ENCODE measurements at regions of chr12 and their contacts with region 1.

Region 1: DNA sequence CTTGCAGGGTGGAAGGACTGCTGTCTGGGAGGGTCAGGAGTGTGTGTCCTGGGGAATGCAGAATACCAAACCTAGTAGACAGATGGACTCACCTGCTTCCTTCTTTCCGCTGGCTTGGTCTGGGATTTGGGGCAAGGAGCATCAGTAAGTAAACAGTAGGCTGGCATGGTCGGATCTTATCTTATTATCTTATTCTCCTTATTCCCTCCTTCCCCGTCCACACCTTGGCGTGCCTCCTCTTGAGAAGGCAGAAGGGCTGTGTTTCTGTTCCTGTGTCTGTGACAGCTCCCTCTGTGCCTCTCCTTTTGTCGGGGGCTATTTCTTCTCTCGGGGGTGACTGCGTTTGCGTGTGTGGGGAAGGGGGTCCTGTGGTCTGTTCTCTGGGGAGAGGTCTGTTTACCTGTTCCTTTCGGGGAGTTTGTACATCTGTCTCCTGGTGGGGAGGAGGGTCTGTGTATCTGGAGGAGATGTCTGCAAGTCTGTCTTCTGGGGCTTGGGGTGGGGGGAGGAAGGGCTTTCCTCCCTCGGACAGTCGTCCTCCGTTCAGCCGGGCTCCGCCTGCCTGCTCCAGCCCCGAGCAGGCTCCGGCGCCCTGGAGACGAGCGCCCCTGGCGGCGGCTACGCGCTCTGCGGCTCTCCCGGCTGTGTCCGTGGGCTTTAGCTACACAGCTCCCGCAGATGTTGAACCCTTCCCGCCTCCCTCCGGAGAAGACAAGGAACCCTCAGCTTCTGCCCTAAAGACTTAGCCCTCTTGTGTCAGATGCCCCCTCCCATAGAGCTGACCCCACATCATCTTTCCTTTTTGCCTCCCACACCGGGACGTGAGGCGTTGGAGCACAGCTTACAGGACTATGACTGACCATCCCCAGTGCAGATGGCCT is 4.3 kb downstream of the KRT86 start:
- DNase-seq: peak; percentile 76
- H3K4me3 Mint-ChIP-seq: no peak overlapping the region
- H3K27ac Mint-ChIP-seq: no peak overlapping the region
- H3K4me1 Mint-ChIP-seq: peaks cover 9% of the 10 kb centered on the region
- H3K27me3 Mint-ChIP-seq: peaks cover 56% of the 10 kb centered on the region

Region 2: GRCh38 chr12:52213512-52214420 is 65.0 kb before region 1 on chr12:
- CTCF ChIA-PET with region 1: interaction called, 13 read pairs
- POLR2A ChIA-PET with region 1: no interaction called
- DNase-seq: peak; percentile 71
- H3K4me3 Mint-ChIP-seq: no peak overlapping the region
- H3K27ac Mint-ChIP-seq: no peak overlapping the region
- H3K4me1 Mint-ChIP-seq: no peaks in the 10 kb centered on the region
- H3K27me3 Mint-ChIP-seq: peaks cover 15% of the 10 kb centered on the region

Region 3: DNA sequence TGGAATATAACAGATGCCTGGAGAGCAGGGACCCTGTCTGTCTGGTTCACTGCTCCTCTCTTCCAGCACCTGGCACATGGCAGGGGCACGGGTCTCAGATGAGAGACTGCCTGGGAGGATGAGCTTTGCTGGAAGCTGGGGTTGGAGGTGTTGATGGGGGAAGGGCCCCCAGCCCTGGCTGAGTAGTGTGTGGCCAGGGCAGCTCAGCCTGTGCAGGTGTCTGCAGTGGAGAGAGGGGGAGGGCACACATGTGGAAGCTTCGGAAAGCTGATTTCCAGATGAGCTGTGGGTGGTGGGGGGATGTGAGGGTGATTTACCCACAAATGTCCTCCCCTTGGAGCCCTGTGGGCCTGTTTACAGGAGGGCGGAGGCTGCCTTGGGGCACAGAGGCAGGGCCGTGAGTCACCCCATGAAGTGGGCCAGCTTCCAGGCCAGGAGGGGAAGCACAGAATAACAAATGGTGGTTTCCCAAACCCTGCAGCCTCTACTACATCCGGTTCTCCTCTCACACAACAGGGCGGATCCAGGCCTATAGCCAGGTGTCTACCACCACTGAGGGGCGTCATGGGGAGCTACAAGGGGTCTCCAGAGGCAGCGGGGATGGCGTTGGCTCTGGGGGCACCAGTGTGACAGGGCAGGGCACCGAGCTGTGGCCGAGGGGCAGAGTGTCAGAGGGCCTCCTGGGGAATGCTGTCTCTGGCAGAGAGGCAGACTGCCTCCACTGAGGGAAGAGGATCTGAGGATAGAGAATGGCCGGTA is 34.7 kb before region 1 on chr12:
- CTCF ChIA-PET with region 1: interaction called, 32 read pairs
- POLR2A ChIA-PET with region 1: no interaction called
- DNase-seq: peak; percentile 78
- H3K4me3 Mint-ChIP-seq: peak overlapping the region; percentile 66
- H3K27ac Mint-ChIP-seq: peak overlapping the region; percentile 89
- H3K4me1 Mint-ChIP-seq: peaks cover 56% of the 10 kb centered on the region
- H3K27me3 Mint-ChIP-seq: peaks cover 6% of the 10 kb centered on the region

Region 4: DNA sequence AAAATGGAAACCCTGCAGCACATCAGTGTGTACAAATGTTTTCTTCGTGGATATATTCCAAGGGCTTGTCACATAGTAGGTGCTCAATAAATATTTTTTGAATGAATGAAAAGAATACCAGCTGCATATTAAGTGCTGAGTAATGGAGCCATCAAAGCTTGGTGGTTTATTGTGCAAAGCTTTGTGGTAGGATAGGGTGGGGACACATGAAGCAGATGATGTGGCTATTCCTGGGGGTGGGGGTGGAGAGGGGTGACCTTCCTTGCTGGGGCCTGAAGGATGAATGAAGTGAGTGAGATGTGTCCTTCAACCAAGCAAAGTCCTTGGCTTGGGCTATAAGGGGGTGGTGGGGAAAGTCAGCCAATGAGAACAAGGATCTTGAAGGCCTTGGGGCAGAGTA is 16.9 kb after region 1 on chr12:
- CTCF ChIA-PET with region 1: interaction called, 31 read pairs
- POLR2A ChIA-PET with region 1: no interaction called
- DNase-seq: no peak
- H3K4me3 Mint-ChIP-seq: no peak overlapping the region
- H3K27ac Mint-ChIP-seq: no peak overlapping the region
- H3K4me1 Mint-ChIP-seq: peaks cover 7% of the 10 kb centered on the region
- H3K27me3 Mint-ChIP-seq: peaks cover 64% of the 10 kb centered on the region

Region 5: GRCh38 chr12:52327052-52327829 is 48.5 kb after region 1 on chr12:
- CTCF ChIA-PET with region 1: interaction called, 15 read pairs
- POLR2A ChIA-PET with region 1: no interaction called
- DNase-seq: peak; percentile 83
- H3K4me3 Mint-ChIP-seq: no peak overlapping the region
- H3K27ac Mint-ChIP-seq: peak overlapping the region; percentile 13
- H3K4me1 Mint-ChIP-seq: peaks cover 16% of the 10 kb centered on the region
- H3K27me3 Mint-ChIP-seq: peaks cover 34% of the 10 kb centered on the region

Region 6: DNA sequence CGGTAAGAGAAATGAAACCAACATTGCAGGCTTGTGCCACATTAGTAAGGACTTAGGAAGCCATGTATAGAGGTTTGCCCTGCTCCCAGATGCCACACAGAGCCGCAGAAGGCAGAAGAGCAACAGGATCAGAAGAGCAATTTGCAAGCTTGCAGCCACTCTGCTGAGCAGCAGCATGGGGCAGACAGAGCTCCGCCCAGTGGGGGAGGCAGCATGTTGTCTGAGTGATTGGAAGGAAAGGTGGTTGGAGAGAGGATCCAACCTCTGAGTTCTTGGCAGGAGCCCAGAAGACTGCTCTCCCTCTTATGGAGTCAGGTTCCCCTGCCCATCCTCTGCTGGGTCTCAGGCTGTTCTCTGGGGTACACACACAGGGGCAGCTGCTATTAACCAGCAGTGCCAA is 216.6 kb after region 1 on chr12:
- CTCF ChIA-PET with region 1: no interaction called
- POLR2A ChIA-PET with region 1: no interaction called
- DNase-seq: no peak
- H3K4me3 Mint-ChIP-seq: no peak overlapping the region
- H3K27ac Mint-ChIP-seq: no peak overlapping the region
- H3K4me1 Mint-ChIP-seq: no peaks in the 10 kb centered on the region
- H3K27me3 Mint-ChIP-seq: peaks cover 26% of the 10 kb centered on the region